ENCODE measurements at regions of chr3 and their contacts with region 1.

Region 1: GRCh38 chr3:149816986-149817385 is 4.0 kb downstream of the RNF13 start:
- DNase-seq: peak; percentile 59
- H3K27ac ChIP-seq: no peak overlapping the region
- CTCF ChIP-seq: no peak

Region 2: DNA sequence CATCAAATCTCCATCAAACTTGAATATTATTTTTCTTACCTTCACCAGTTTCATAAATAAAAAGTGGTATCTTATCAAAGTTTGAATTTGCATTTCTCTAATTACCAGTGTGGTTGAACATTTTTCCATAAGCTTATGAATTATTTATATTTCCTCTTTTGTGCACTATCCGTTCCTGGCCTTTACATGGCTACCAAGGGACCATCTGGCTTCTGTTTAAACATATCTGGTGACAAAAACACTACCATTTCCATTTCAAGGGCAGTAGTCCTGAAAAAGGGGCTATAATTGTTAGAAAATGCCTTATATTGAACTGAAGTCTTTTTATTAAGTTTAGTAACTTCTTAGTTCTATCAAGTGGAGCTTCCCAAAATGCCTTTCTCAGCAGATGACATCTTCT is 386.8 kb before region 1 on chr3:
- CTCF ChIA-PET with region 1: no interaction called
- POLR2A ChIA-PET with region 1: interaction called, 10 read pairs
- DNase-seq: no peak
- H3K27ac ChIP-seq: no peak overlapping the region
- CTCF ChIP-seq: no peak

Region 3: GRCh38 chr3:149832086-149832485 is 15.1 kb after region 1 on chr3:
- CTCF ChIA-PET with region 1: no interaction called
- POLR2A ChIA-PET with region 1: no interaction called
- DNase-seq: no peak
- H3K27ac ChIP-seq: no peak overlapping the region
- CTCF ChIP-seq: no peak

Region 4: DNA sequence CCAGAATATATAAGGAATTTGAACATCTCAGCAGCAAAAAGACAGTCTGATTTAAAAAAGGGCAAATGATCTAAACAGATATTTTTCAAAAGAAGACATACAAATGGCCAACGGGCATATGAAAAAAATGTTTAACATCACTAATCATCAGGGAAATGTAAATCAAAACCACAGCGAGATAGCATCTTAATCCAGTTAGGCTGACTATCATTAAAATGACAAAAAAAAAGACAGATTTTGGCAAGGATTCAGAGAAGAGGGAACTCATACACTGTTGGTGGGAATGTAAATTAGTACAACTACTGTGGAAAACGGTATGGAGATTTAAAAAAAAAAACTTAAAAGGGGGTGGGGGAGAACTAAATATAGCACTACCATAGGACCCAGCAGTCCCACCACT is 43.9 kb after region 1 on chr3:
- CTCF ChIA-PET with region 1: no interaction called
- POLR2A ChIA-PET with region 1: no interaction called
- DNase-seq: no peak
- H3K27ac ChIP-seq: no peak overlapping the region
- CTCF ChIP-seq: no peak

Measured in RWPE1 (cell line).